Activated CD4-positive, alpha-beta T cell treated with anti-CD3 and anti-CD28 coated beads for 36 hours (primary cell): ENCODE measurements at regions of chr11 and their contacts with region 1.

Region 1: DNA sequence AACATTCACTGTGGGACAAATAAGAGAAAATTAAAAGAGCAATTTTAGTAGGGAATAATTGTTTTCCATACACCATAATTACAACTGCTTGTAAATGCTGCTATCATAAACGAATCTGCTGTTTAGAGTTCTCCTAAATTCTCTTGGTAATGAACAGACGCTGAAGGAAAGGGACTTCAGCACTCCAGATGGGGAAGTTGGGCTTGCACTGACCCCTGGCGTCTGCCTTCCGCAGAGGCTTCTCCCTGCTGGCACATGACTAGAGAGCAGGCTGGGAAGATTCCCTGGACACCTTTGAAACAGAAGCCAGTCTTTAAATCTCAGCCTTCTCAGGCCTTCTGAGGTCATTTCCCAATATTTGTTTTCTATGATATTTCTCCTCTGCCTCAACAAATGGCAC is 84.1 kb downstream of the NXPE2 start:
- DNase-seq: peak; percentile 52
- ATAC-seq: no peak
- H3K4me3 Mint-ChIP-seq: no peak overlapping the region
- H3K27ac Mint-ChIP-seq: no peak overlapping the region
- H3K4me1 Mint-ChIP-seq: no peaks in the 10 kb centered on the region
- H3K27me3 Mint-ChIP-seq: peaks cover 25% of the 10 kb centered on the region

Region 2: GRCh38 chr11:114280696-114281095 is 481.7 kb before region 1 on chr11:
- CTCF ChIA-PET with region 1: no interaction called
- POLR2A ChIA-PET with region 1: no interaction called
- intact Hi-C with region 1: loop called in 1 of 2 experiments (anchors 1 kb)
- DNase-seq: peak; percentile 41
- ATAC-seq: no peak
- H3K4me3 Mint-ChIP-seq: no peak overlapping the region
- H3K27ac Mint-ChIP-seq: no peak overlapping the region
- H3K4me1 Mint-ChIP-seq: no peaks in the 10 kb centered on the region
- H3K27me3 Mint-ChIP-seq: peaks cover 15% of the 10 kb centered on the region

Region 3: GRCh38 chr11:114745150-114745671 is 17.2 kb before region 1 on chr11:
- CTCF ChIA-PET with region 1: no interaction called
- POLR2A ChIA-PET with region 1: no interaction called
- intact Hi-C with region 1: no loop called
- DNase-seq: no peak
- ATAC-seq: no peak
- H3K4me3 Mint-ChIP-seq: no peak overlapping the region
- H3K27ac Mint-ChIP-seq: no peak overlapping the region
- H3K4me1 Mint-ChIP-seq: no peaks in the 10 kb centered on the region
- H3K27me3 Mint-ChIP-seq: peaks cover 11% of the 10 kb centered on the region

Region 4: DNA sequence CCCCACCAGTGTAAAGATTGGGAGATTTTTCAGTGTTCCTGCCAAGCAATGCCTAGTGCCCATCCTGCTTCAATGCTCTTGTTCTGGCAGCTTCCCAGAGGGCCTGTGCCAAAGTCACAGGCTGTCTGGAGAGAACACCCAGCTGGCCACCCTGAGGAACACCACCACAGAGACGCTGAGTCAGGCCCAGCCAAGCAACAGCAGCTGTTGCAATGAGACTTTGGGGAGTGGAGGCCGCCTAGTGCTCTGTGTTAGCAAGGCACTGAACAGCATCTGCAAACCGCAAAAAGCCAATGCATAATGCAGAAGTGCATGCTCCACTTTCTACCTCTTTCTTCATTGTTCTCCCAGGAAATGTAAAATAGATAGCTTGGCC is 84.0 kb after region 1 on chr11:
- CTCF ChIA-PET with region 1: no interaction called
- POLR2A ChIA-PET with region 1: no interaction called
- intact Hi-C with region 1: no loop called
- DNase-seq: peak; percentile 4
- ATAC-seq: no peak
- H3K4me3 Mint-ChIP-seq: no peak overlapping the region
- H3K27ac Mint-ChIP-seq: no peak overlapping the region
- H3K4me1 Mint-ChIP-seq: no peaks in the 10 kb centered on the region
- H3K27me3 Mint-ChIP-seq: peaks cover 5% of the 10 kb centered on the region

Region 5: DNA sequence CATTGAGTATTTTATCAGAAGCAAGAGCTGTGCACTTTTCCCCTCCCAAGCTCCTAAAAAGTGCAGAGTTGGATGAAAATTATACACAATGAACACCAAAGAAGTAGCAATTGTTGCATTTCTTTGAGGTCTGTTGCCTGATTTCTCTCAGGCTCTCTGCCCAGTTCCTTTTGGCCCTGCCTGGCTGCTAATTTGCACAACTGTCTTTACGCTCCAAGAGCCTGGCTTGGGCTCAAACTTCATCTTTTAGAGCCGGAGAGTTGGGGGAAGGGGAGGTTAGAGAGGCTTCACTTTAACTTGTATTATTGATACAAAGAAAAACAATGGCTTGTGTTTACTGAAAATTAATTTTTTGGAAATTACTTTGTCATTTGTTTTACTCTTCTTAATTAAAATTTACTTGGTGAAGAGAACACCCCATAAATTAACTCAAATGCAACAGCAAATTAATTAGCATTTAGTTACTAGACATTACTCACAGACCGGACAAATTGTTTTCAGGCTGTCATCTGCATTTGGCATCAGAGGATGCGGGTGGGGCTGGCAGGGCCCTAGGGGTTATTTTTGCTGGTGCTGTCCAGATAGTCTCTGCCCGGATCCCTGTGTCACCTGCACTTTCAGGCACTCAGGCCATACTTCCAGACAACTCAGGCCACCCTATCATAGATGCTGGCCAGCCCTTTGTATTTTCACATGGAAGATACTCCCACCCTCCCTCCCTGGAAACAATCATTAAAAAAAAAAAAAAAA is 323.2 kb after region 1 on chr11:
- CTCF ChIA-PET with region 1: no interaction called
- POLR2A ChIA-PET with region 1: no interaction called
- intact Hi-C with region 1: no loop called
- DNase-seq: no peak
- ATAC-seq: no peak
- H3K4me3 Mint-ChIP-seq: no peak overlapping the region
- H3K27ac Mint-ChIP-seq: no peak overlapping the region
- H3K4me1 Mint-ChIP-seq: no peaks in the 10 kb centered on the region
- H3K27me3 Mint-ChIP-seq: no peaks in the 10 kb centered on the region